ENCODE measurements at regions of chr7 and their contacts with region 1.

Region 1: DNA sequence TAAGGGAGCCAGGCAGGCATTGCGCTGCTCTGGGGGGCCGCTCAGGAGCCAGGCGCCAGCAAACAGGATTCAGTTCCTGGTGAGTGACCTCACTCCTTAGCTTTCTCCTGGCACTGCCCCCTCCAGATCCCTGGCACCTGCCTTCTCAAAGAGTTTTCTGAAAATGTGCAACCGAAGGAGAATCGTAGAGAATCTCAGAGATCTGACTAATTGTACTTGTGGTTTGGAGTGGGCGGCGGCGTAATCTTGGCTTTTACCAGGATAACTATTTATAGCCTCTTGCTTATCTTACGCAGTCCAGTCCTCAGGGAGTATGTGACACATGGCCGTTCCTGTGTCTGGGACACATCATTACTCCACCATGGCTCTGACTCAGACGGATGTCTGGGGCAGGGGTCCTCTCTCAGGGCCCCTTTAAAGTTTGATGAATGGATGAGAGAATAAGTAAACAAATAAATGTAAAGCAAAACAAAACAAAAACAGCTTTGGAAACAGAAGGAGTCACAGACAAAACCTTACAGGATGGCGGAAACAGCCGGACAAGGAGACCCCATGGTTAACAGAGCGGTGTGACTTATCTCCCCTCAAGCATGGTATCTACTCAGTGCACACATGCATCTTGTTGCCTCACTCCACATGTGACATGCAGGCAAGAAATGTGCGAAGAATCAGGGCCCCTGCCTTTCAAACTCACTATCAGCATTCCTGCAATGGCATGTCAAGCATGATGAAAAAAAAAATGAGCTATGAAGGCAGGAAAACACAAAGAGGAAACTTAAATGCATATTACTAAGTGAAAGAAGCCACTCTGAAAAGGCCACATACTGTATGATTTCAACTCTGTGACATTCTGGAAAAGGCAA is 99.7 kb downstream of the TNS3 start:
- DNase-seq: no peak
- ATAC-seq: peak; percentile 74
- H3K4me3 Mint-ChIP-seq: peak overlapping the region; percentile 75
- H3K27ac Mint-ChIP-seq: peak overlapping the region; percentile 91
- H3K4me1 Mint-ChIP-seq: peaks cover 59% of the 10 kb centered on the region
- H3K27me3 Mint-ChIP-seq: no peaks in the 10 kb centered on the region
- CTCF ChIP-seq: no peak

Region 2: GRCh38 chr7:46930336-46930735 is 551.9 kb before region 1 on chr7:
- CTCF ChIA-PET with region 1: no interaction called
- POLR2A ChIA-PET with region 1: no interaction called
- intact Hi-C with region 1: no loop called
- DNase-seq: no peak
- ATAC-seq: no peak
- H3K4me3 Mint-ChIP-seq: no peak overlapping the region
- H3K27ac Mint-ChIP-seq: no peak overlapping the region
- H3K4me1 Mint-ChIP-seq: no peaks in the 10 kb centered on the region
- H3K27me3 Mint-ChIP-seq: no peaks in the 10 kb centered on the region
- CTCF ChIP-seq: no peak

Region 3: DNA sequence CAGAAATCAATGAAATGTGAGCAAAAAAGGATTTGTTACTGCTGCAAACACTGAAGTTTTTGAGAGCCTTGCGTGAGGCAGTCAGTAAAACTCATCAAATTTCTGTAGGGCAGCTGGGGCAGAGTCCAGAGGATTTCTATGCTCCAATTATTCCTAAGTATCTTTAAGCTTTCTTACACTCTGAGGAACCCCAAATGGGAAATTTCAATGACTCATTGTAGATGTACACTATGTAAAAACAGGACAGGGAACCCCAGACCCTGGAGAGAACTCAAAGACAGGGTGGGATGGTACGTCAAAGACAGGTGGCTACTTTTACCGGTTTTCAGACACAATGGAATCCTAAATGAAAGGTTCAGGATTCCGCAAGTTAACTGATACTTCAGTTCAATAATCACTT is 20.5 kb before region 1 on chr7:
- CTCF ChIA-PET with region 1: no interaction called
- POLR2A ChIA-PET with region 1: no interaction called
- intact Hi-C with region 1: loop called (anchors 2 kb)
- DNase-seq: no peak
- ATAC-seq: no peak
- H3K4me3 Mint-ChIP-seq: no peak overlapping the region
- H3K27ac Mint-ChIP-seq: no peak overlapping the region
- H3K4me1 Mint-ChIP-seq: peaks cover 6% of the 10 kb centered on the region
- H3K27me3 Mint-ChIP-seq: no peaks in the 10 kb centered on the region
- CTCF ChIP-seq: no peak

Region 4: DNA sequence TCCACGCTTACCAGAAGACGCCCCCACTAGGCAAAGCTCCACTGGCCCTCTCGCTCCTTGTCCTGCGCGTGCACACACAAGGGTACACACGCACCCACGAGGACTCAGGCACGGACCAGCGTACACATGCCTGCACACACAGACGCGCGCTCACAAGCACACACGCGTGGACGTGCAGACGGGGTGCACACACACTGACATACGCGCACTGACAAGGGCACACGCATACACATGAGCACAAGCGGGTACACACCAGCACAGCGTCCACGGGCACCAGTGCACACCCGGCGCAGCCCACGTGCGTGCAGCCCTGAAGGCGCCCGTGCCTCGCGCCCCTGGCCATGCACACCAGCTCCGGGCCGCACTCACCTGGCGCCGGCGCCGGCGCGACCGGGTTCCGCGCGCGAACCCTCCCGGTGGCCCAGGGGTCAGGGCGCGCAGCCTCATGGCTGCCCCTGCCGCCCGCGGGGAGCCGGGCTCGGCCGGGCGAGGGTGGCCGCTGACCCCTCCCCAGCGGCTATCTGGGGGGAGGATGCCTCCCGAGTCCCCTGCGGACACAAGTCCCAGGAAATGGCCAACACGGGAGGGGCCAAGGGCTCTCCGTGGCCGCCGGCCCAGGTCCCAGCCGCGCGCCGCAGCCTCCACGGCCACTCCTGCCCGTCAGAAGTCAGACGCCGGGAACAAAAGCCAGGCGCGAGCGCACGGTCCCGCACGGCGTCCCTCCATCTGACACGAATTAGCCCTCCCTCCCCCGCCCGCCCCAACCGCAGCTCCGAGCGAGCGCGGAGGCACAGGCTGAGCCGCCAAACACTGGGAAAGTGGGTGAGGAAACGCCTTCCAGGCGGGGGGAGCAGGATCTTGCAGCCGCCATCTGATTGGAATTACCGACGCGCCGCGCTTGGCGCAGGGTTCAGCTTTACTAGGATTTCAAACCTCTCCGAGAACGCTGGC is 54.7 kb after region 1 on chr7:
- CTCF ChIA-PET with region 1: no interaction called
- POLR2A ChIA-PET with region 1: interaction called, 3 read pairs
- intact Hi-C with region 1: loop called (anchors 5 kb)
- DNase-seq: no peak
- ATAC-seq: no peak
- H3K4me3 Mint-ChIP-seq: peak overlapping the region; percentile 67
- H3K27ac Mint-ChIP-seq: no peak overlapping the region
- H3K4me1 Mint-ChIP-seq: peaks cover 32% of the 10 kb centered on the region
- H3K27me3 Mint-ChIP-seq: peaks cover 5% of the 10 kb centered on the region
- CTCF ChIP-seq: no peak

Region 5: DNA sequence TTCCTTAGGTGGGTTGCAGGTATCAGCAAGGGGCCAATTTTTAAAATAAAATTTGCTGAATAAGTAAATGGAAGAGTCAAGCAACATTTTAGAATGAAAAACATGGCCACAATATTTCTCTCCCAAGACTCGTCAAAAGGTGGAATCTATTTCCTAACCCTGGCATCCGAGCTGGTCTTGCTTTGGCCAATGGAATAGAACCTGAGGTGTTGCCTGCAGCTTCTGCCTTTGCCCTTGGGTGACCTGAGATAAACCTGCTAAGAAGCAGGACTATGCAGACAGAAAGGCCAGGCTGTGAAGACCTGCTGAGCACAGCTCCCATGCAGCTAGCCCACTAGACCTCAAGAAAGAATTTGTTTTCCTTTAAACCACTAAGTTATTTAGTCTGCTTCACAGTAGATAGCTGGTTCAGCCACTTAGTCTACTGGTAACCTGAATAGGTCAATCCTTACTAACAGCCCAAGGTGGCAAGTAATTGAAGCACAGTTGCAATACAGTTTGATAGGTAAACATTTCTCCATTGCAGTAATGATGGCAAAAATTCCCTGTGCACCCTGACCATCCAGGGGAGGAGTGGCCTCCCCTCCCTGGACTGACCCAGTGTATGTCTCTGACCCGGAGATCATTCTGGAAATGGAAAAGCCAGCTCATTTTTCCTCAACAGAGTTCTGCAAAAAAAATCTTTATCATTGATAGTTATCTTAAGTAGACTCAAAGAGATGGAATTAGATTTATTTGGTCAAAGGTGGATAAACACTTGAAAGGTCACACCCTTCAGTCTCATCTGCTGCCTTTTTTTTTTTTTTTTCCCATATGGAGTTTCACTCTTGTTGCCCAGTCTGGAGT is 79.6 kb after region 1 on chr7:
- CTCF ChIA-PET with region 1: no interaction called
- POLR2A ChIA-PET with region 1: no interaction called
- intact Hi-C with region 1: no loop called
- DNase-seq: no peak
- ATAC-seq: no peak
- H3K4me3 Mint-ChIP-seq: no peak overlapping the region
- H3K27ac Mint-ChIP-seq: no peak overlapping the region
- H3K4me1 Mint-ChIP-seq: peaks cover 10% of the 10 kb centered on the region
- H3K27me3 Mint-ChIP-seq: no peaks in the 10 kb centered on the region
- CTCF ChIP-seq: no peak

Region 6: DNA sequence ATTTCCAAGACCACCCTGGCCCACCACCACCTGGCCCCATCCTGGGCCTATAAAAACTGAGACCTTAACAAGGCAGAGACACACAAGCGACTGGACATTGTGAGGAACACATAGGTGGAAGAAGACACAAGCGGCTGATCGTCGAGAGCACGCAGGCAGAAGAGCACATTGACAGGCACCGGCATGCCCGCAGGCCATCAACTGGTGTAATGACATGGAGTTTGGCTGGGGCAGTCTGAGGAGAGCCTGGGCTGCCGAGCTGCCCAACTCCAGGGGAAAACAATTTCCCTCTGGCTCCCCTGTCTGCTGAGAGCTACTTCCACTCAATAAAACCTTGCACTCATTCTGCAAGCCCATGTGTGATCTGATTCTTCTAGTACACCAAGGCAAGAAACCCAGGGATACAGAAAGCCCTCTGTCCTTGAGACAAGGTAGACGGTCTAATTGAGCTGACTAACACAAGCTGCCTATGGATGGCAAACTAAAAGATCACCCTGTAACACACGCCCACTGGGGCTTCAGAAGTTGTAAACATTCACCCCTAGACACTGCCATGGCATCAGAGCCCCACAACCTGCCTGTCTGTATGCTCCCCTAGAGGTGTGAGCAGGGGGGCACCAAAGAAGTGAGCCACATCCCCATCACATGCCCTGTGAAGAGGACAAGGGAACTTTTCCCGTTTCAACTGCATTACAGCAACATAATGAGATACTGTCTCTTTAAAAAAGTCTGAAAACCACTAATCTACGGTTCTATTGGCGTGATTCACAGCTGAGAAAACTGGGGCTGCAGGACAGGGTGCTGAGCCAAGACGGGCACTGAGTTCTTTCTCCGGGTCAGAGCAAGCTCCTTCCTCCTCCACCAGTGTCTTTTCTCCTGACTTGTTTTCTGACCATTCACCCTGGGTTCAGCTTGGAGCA is 118.2 kb after region 1 on chr7:
- CTCF ChIA-PET with region 1: no interaction called
- POLR2A ChIA-PET with region 1: interaction called, 5 read pairs
- intact Hi-C with region 1: loop called (anchors 1 kb)
- DNase-seq: no peak
- ATAC-seq: peak; percentile 56
- H3K4me3 Mint-ChIP-seq: peak overlapping the region; percentile 59
- H3K27ac Mint-ChIP-seq: peak overlapping the region; percentile 90
- H3K4me1 Mint-ChIP-seq: peaks cover 49% of the 10 kb centered on the region
- H3K27me3 Mint-ChIP-seq: no peaks in the 10 kb centered on the region
- CTCF ChIP-seq: no peak

Region 7: DNA sequence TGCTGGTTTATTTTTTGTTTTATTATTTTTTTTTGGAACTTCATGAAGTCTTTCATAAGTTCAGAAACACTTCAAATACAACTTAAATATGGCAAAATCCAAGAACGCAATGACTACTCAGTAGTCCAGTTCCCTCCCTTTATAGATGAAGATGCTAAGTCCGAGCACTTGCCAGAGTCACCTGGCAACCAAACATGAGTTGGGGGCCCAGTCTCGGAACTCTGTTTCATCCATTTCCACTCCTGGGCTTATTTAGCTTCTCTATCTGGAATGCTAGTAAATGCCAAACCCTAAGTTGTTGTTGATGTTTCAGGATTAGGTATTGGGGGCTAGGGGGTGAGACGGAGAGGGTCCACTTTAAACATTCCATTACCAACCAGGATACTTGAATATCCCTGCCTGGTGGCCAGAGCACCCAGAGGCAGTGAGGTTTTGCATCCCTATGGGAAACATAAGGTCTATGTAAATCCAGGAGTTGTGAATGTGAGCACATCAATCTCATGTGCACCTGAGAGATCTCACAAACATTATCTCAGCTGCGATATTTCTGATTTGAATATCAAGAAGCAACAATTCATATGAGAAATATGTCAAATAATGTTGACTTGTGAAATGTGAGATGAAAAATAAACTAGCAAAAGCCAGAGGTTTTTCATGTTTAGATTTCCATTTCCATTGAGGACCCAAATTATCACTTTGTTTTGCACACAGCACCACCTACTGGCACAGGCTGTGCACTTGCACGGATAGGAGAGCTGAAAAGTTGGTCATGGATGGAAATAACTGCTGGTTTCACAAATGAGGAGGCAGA is 336.8 kb after region 1 on chr7:
- CTCF ChIA-PET with region 1: interaction called, 15 read pairs
- POLR2A ChIA-PET with region 1: no interaction called
- intact Hi-C with region 1: loop called (anchors 1 kb)
- DNase-seq: no peak
- ATAC-seq: peak; percentile 77
- H3K4me3 Mint-ChIP-seq: no peak overlapping the region
- H3K27ac Mint-ChIP-seq: no peak overlapping the region
- H3K4me1 Mint-ChIP-seq: peaks cover 7% of the 10 kb centered on the region
- H3K27me3 Mint-ChIP-seq: no peaks in the 10 kb centered on the region
- CTCF ChIP-seq: peak; percentile 85

Region 8: GRCh38 chr7:48088559-48089045 is 606.4 kb after region 1 on chr7:
- CTCF ChIA-PET with region 1: no interaction called
- POLR2A ChIA-PET with region 1: interaction called, 4 read pairs
- intact Hi-C with region 1: loop called (anchors 2 kb)
- DNase-seq: no peak
- ATAC-seq: peak; percentile 73
- H3K4me3 Mint-ChIP-seq: peak overlapping the region; percentile 88
- H3K27ac Mint-ChIP-seq: peak overlapping the region; percentile 82
- H3K4me1 Mint-ChIP-seq: peaks cover 51% of the 10 kb centered on the region
- H3K27me3 Mint-ChIP-seq: no peaks in the 10 kb centered on the region
- CTCF ChIP-seq: no peak

Measured in activated B cell treated with CpG ODN at 0.5 μM for 24 hours (primary cell).